A673 (cell line): ENCODE measurements at regions of chrX and their contacts with region 1.

Region 1: GRCh38 chrX:74286950-74287740 is 16.8 kb upstream of the ZCCHC13 start:
- DNase-seq: no peak
- H3K4me3 ChIP-seq: no peak overlapping the region
- H3K27ac ChIP-seq: no peak overlapping the region
- H3K4me1 ChIP-seq: peaks cover 5% of the 10 kb centered on the region
- H3K27me3 ChIP-seq: no peaks in the 10 kb centered on the region
- CTCF ChIP-seq: no peak

Region 2: GRCh38 chrX:72540318-72540717 is 1746.8 kb before region 1 on chrX:
- CTCF ChIA-PET with region 1: no interaction called
- POLR2A ChIA-PET with region 1: no interaction called
- intact Hi-C with region 1: no loop called
- DNase-seq: peak; percentile 40
- H3K4me3 ChIP-seq: no peak overlapping the region
- H3K27ac ChIP-seq: no peak overlapping the region
- H3K4me1 ChIP-seq: no peaks in the 10 kb centered on the region
- H3K27me3 ChIP-seq: no peaks in the 10 kb centered on the region
- CTCF ChIP-seq: peak; percentile 56

Region 3: DNA sequence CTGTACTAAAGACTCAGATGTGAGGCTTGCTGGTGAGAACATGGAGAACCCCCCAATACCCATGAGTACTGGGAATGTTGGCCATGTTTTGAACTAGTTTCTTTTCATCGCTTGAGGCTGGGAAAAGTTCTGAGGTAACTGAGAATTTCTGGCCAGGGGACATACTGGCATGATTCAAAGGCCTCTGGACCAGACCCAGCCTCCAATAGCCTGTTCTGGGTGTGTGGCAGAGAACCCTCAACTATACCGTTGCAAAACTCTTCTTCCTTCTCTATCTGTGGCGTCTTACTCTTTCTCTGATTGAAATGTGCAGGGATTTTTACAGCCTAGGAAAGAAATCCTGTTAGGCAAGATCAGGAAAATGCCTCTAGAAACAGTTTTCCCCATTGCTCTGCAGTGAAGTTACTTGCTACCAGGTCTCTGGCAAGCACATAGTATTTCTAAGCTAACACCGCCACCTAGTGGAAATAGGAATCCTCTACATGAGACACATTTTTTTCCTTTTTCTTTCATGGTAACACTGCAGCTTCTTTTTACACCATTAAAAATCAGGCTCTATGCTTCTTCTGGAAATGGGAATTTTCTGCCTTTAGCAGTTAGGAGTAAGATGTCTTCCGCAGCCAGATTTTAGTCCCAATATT is 153.9 kb before region 1 on chrX:
- CTCF ChIA-PET with region 1: no interaction called
- POLR2A ChIA-PET with region 1: no interaction called
- intact Hi-C with region 1: no loop called
- DNase-seq: peak; percentile 73
- H3K4me3 ChIP-seq: no peak overlapping the region
- H3K27ac ChIP-seq: no peak overlapping the region
- H3K4me1 ChIP-seq: no peaks in the 10 kb centered on the region
- H3K27me3 ChIP-seq: no peaks in the 10 kb centered on the region
- CTCF ChIP-seq: peak; percentile 77

Region 4: DNA sequence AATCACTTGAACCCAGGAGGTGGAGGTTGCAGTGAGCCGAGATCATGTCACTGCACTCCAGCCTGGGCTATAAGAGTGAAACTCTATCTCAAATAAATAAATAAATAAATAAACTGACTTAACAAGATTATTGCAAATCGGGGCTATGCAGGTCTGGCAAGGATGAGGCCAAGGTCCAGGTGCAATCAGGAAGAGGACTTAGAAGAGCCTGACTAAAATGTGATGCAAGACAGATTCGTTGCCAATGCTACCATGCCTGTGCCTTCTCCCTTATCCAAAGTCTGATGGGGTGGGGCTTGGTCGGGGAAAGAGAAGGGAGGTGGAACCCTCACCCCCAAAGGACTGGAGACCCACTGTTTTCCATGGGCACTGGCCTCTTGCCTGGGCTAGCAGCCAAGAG is 31.5 kb after region 1 on chrX:
- CTCF ChIA-PET with region 1: no interaction called
- POLR2A ChIA-PET with region 1: interaction called, 11 read pairs
- intact Hi-C with region 1: no loop called
- DNase-seq: no peak
- H3K4me3 ChIP-seq: no peak overlapping the region
- H3K27ac ChIP-seq: no peak overlapping the region
- H3K4me1 ChIP-seq: no peaks in the 10 kb centered on the region
- H3K27me3 ChIP-seq: no peaks in the 10 kb centered on the region
- CTCF ChIP-seq: no peak